H1 (cell line): ENCODE measurements at regions of chr2 and their contacts with region 1.

Region 1: GRCh38 chr2:157336137-157337010 is 10.8 kb upstream of the ERMN start:
- DNase-seq: peak in 1 of 2 experiments; percentile 54
- H3K4me3 ChIP-seq: no peak overlapping the region
- H3K27ac ChIP-seq: no peak overlapping the region
- H3K4me1 ChIP-seq: peaks cover 0 to 4% (median 0%) of the 10 kb centered on the region in 4 experiments; a peak in 1 of 7 replicates
- H3K27me3 ChIP-seq: no peaks in the 10 kb centered on the region
- CTCF ChIP-seq: peak in 2 of 3 experiments; percentile 54 to 62; a peak in 3 of 4 replicates
- EP300 ChIP-seq: no peak
- POLR2A ChIP-seq: no peak
- RAD21 ChIP-seq: peak; percentile 38 to 40

Region 2: GRCh38 chr2:157315901-157316300 is 20.5 kb before region 1 on chr2:
- CTCF ChIA-PET with region 1: interaction called, 21 read pairs
- POLR2A ChIA-PET with region 1: no interaction called
- DNase-seq: no peak
- H3K4me3 ChIP-seq: no peak overlapping the region
- H3K27ac ChIP-seq: no peak overlapping the region
- H3K4me1 ChIP-seq: peaks cover 0 to 3% (median 1%) of the 10 kb centered on the region in 4 experiments; a peak in 2 of 7 replicates
- H3K27me3 ChIP-seq: no peaks in the 10 kb centered on the region
- CTCF ChIP-seq: no peak
- EP300 ChIP-seq: no peak
- POLR2A ChIP-seq: no peak
- RAD21 ChIP-seq: no peak

Region 3: GRCh38 chr2:157349949-157350515 is 13.7 kb after region 1 on chr2:
- CTCF ChIA-PET with region 1: interaction called, 54 read pairs
- POLR2A ChIA-PET with region 1: interaction called, 3 read pairs
- DNase-seq: no peak
- H3K4me3 ChIP-seq: no peak overlapping the region
- H3K27ac ChIP-seq: no peak overlapping the region
- H3K4me1 ChIP-seq: peaks cover 0 to 10% (median 0%) of the 10 kb centered on the region in 4 experiments; a peak in 2 of 7 replicates
- H3K27me3 ChIP-seq: no peaks in the 10 kb centered on the region
- CTCF ChIP-seq: no peak
- EP300 ChIP-seq: no peak
- POLR2A ChIP-seq: no peak
- RAD21 ChIP-seq: no peak

Region 4: GRCh38 chr2:157363612-157364101 is 27.3 kb after region 1 on chr2:
- CTCF ChIA-PET with region 1: interaction called, 12 read pairs
- POLR2A ChIA-PET with region 1: no interaction called
- DNase-seq: no peak
- H3K4me3 ChIP-seq: no peak overlapping the region
- H3K27ac ChIP-seq: no peak overlapping the region
- H3K4me1 ChIP-seq: no peaks in the 10 kb centered on the region
- H3K27me3 ChIP-seq: no peaks in the 10 kb centered on the region
- CTCF ChIP-seq: no peak
- EP300 ChIP-seq: no peak
- POLR2A ChIP-seq: no peak
- RAD21 ChIP-seq: no peak

Region 5: DNA sequence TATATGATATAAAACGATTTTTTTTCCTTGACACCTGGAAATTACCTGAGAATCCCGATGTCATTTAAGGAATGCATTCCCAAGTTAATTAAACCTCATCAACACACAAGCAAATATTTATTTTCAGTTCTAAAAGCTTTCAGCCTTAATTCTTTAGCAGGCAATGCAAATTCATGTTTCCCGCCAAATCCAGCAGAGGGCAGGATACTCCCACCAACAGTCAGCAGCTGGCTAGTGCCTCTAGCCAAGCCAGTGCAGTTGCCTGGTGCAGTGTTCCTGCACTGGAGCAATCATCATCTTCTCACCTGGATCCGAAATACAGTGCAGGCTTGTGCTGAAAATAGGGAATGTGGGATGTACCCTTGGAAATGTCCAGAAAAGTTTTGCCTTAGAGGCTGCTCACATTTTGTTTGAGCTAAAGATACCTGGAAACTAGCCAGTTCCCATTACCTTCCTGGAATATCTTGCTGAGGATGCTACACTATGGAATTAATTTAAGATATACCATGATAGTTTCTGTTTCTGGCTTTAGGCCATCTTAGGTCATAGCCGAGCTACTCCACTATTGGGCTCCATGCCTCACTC is 155.9 kb after region 1 on chr2:
- CTCF ChIA-PET with region 1: interaction called, 22 read pairs
- POLR2A ChIA-PET with region 1: no interaction called
- DNase-seq: peak; percentile 23 to 71
- H3K4me3 ChIP-seq: no peak overlapping the region
- H3K27ac ChIP-seq: no peak overlapping the region
- H3K4me1 ChIP-seq: no peaks in the 10 kb centered on the region
- H3K27me3 ChIP-seq: no peaks in the 10 kb centered on the region
- CTCF ChIP-seq: peak; percentile 71 to 90 (median 86)
- EP300 ChIP-seq: no peak
- POLR2A ChIP-seq: no peak
- RAD21 ChIP-seq: peak; percentile 96 to 98

Region 6: DNA sequence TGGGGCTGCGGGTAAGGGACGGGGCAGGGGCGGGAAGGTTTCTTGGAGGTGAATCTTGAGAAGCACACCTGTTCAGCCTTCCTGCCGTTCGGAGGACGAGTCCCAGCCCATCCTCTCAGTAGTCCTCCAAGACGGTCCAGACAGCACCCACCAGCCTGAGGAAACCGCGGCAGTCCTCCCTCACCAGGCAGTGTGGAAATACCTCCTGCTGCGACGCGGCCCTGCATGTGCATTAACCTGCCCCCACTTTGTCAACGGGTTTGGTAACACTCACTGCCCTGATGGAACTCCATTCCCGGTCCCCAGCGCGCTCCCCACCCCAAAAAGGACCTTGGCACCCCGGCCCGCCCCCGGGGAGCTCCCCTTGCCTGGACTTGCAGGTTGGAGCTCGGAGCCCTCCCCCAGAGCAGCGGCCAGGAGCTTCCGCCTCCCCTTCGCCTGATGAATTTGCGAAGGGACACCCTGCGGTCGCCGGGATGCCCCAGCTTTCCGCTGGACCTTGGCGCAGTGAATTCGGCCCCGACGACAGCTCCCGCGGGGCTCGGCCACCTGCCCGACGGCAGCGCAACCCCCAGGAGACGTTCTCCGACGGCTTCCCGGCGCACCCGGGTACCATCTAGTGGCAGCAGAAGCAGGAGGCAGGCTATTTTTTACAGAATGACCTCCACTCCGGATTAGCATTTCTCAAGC is 260.8 kb after region 1 on chr2:
- CTCF ChIA-PET with region 1: no interaction called
- POLR2A ChIA-PET with region 1: no interaction called
- DNase-seq: peak; percentile 21 to 83
- H3K4me3 ChIP-seq: peak overlapping the region; percentile 4 to 50 (median 24); a peak in 6 of 8 replicates
- H3K27ac ChIP-seq: no peak overlapping the region
- H3K4me1 ChIP-seq: no peaks in the 10 kb centered on the region
- H3K27me3 ChIP-seq: peaks cover 0 to 5% (median 3%) of the 10 kb centered on the region in 4 experiments; a peak in 2 of 7 replicates
- CTCF ChIP-seq: peak; percentile 73 to 82 (median 74)
- EP300 ChIP-seq: no peak
- POLR2A ChIP-seq: no peak
- RAD21 ChIP-seq: peak; percentile 71 to 80